PC-3 (cell line): ENCODE measurements at regions of chr1 and their contacts with region 1.

Region 1: GRCh38 chr1:232822530-232822929 is 17.3 kb downstream of the MAP10 start:
- DNase-seq: no peak
- ATAC-seq: no peak
- H3K4me3 ChIP-seq: no peak overlapping the region
- H3K27ac ChIP-seq: no peak overlapping the region
- H3K4me1 ChIP-seq: no peaks in the 10 kb centered on the region
- H3K27me3 ChIP-seq: no peaks in the 10 kb centered on the region
- CTCF ChIP-seq: no peak

Region 2: DNA sequence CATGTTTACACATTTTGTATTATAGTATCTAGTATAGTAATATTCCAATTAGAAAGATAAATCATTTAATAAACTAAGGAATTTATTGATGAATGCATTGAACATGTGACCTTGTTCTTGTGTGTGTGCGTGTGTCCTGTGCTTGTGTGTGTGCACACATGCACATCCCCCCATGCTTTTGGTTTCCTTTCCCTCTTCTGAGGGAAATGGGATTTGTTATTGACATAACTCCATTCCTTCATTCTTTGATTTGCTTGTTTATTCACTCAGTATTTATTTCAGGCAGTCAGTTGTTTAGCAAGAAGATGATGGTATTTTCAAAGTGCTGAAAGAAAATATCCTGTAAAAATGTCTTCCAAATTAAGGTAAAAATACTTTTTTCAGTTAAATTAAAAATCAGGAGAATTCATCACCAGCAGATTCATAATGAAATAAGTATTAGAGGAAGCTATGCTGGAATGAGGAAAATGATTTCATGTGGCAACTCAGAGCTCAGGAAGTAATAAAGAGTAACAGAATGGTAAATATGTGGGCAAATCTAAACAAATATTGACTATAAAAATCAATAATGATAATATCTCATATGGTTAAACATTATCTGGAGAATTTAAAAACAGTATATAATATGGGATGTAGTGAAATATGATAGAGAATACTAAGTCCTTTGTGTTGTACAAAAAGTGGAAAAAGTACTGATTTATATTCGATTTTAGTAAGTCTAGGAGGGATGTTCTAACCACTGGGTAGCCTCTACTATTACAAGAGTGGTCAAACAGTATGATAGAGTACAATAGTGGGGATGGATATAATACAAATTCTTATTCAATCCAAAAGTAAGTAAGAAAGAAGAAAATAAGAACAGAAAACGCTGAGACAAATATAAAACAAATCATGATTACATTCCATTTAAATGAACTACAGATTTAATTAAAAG is 157.4 kb before region 1 on chr1:
- CTCF ChIA-PET with region 1: no interaction called
- POLR2A ChIA-PET with region 1: no interaction called
- intact Hi-C with region 1: loop called (anchors 2 kb)
- DNase-seq: peak; percentile 68
- ATAC-seq: peak; percentile 81
- H3K4me3 ChIP-seq: 0 out of 2 replicates have a peak overlapping the region, but pooled peaks have one; percentile 3
- H3K27ac ChIP-seq: peak overlapping the region; percentile 72
- H3K4me1 ChIP-seq: peaks cover 21% of the 10 kb centered on the region
- H3K27me3 ChIP-seq: no peaks in the 10 kb centered on the region
- CTCF ChIP-seq: no peak

Region 3: DNA sequence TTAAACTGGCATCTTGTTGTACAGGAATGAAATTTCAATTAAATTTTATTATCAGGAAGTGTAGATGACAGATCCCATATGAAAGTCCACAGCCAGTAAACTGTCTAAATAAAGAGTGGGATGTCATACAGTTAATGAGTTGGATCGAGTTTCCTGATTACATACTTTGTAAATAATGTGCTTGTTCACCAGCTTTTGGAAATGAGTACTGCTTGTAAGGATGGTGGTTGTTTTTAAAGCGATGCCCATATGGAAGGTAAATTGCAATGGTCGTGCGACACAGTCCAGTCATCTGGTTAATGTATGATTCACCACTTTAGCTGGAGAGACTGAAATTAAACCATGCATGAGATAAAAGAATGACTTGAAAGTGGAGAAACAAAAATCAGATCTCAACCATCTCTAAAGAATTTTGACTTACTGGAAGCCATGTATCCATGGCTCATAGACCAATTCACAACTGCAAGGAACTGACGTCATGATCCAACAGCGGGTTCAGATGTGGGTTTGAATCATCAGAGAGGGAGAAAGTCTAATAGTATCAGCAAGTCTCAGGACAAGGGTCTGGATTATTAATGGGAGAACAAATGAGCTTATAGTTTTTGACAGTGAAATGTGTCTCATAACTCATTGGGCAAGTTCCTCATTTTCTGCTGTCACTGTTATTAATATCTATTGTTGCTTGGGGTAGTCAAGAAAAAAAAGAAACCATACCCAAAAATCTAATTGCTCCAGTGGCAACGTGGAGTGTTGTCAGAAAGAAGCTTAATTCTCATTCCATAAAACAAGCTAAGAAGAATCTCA is 31.7 kb after region 1 on chr1:
- CTCF ChIA-PET with region 1: no interaction called
- POLR2A ChIA-PET with region 1: no interaction called
- intact Hi-C with region 1: loop called (anchors 1 kb)
- DNase-seq: peak; percentile 81
- ATAC-seq: peak; percentile 95
- H3K4me3 ChIP-seq: no peak overlapping the region
- H3K27ac ChIP-seq: peak overlapping the region; percentile 47
- H3K4me1 ChIP-seq: peaks cover 18% of the 10 kb centered on the region; the same call in 1 of the 2 replicates
- H3K27me3 ChIP-seq: no peaks in the 10 kb centered on the region
- CTCF ChIP-seq: no peak